Activated T-helper 2 cell treated with anti-CD3 and anti-CD28 coated beads, Interferon-gamma antibody, Interleukin-2, Interleukin-4, amounts not matched to agents 10 μg/mL and 5 μg/mL and 100 μg/mL, durations not matched to agents 14 hours and 24 hours and 36 hours (primary cell): ENCODE measurements at regions of chr10 and their contacts with region 1.

Region 1: DNA sequence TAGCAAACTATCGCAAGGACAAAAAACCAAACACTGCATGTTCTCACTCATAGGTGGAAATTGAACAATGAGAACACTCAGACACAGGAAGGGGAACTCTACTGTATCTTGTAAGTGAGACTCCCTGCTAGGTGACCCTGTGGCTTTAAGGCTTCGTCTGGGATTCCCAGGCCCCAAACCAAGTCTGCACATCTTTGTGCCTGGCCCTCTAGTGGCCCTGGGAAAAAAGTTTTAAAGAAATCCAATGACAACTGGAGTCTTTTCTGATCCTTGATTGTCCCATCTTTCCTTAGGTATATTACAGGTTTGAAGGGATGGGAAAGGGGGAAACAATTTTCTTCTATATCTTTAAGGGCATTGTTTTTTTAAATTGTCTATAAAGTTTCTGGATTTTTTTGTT is 10.6 kb upstream of the LIPM start:
- DNase-seq: no peak
- H3K4me3 Mint-ChIP-seq: no peak overlapping the region
- H3K27ac Mint-ChIP-seq: no peak overlapping the region
- H3K4me1 Mint-ChIP-seq: peaks cover 31% of the 10 kb centered on the region
- H3K27me3 Mint-ChIP-seq: peaks cover 20% of the 10 kb centered on the region

Region 2: GRCh38 chr10:88091490-88092105 is 700.3 kb before region 1 on chr10:
- intact Hi-C with region 1: loop called (anchors 10 kb)
- DNase-seq: peak; percentile 71
- H3K4me3 Mint-ChIP-seq: no peak overlapping the region
- H3K27ac Mint-ChIP-seq: no peak overlapping the region
- H3K4me1 Mint-ChIP-seq: peaks cover 34% of the 10 kb centered on the region
- H3K27me3 Mint-ChIP-seq: peaks cover 56% of the 10 kb centered on the region

Region 3: DNA sequence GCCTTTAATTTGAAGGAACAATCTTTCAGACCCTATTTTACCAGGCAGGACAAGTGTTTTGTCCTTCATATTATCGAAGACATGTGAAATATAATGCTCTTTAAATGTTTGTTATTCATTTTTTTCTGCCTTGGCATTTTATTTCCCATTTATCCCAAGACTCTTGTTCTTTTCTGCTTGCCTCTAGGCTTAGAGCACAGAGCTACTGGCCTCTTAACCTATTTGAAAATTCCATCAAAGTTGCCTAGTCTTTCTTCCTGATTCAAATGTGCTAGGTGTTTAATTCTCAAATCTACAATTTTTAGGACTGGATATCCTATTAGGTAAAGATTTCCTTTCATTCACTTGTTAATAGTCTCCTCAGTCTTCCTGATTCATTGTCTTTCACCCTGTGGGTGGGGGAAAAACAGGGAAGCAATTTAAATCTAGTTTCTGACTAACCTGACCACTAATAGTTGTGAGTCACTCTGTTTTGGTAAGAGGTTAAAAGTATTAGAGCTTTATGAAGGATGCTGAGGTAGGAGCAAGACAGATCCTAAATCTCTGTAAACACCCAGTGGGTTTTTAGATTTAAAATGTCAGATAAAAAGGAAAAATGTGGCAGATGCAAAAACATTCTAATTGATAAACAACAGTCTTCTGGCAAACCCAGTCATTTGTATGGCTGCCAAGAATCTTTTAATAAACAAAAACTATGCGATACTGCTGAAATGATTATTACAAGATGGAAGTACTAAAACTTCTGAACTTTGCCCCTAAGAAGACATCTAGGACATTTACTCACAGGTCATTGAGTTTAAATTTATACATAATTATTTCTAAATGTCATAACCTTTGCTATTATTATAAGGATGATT is 84.3 kb before region 1 on chr10:
- intact Hi-C with region 1: loop called (anchors 5 kb)
- DNase-seq: no peak
- H3K4me3 Mint-ChIP-seq: no peak overlapping the region
- H3K27ac Mint-ChIP-seq: no peak overlapping the region
- H3K4me1 Mint-ChIP-seq: peaks cover 18% of the 10 kb centered on the region
- H3K27me3 Mint-ChIP-seq: peaks cover 29% of the 10 kb centered on the region

Region 4: DNA sequence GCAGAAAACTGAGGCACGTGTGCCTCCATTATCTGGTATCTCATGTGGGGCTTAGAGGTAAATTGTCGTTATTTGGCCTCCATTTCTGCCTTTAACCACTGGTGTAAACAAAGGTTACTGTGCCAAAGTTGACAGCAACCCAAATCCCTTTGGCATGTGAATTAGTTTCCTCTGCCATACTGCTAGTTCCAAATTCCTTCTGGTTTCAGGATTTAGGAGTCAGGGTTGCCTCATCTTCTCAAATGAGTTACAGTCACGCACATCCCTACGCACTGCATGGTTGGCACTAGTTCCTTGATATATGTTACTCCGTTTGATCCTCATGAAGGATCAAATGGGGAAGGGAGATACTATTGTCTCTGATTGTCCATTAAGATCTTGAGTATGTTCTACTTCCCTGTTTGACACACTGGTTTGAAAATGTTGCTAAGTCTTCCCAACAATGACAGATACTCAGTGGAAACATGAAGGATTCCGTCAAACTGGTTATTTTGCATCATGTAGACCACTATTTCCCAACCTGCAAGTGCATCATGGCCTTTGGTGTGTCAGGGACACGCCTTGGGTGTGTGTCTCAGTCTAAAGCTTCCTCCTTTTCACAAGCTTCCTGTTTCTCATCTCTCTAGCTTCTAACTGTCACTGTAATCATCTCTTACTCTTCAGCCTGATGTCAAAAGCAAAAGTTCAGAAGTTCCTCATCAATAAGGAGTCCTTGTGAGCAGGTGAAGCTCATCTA is 32.4 kb before region 1 on chr10 and contains the start of gene LIPN:
- intact Hi-C with region 1: loop called (anchors 5 kb)
- DNase-seq: no peak
- H3K4me3 Mint-ChIP-seq: no peak within 1 kb of the TSS
- H3K27ac Mint-ChIP-seq: no peak within 1 kb of the TSS
- H3K4me1 Mint-ChIP-seq: peaks cover 19% of the 10 kb centered on the region
- H3K27me3 Mint-ChIP-seq: peaks cover 37% of the 10 kb centered on the region
- total RNA-seq, gene LIPN: not detected in 2 replicates

Region 5: DNA sequence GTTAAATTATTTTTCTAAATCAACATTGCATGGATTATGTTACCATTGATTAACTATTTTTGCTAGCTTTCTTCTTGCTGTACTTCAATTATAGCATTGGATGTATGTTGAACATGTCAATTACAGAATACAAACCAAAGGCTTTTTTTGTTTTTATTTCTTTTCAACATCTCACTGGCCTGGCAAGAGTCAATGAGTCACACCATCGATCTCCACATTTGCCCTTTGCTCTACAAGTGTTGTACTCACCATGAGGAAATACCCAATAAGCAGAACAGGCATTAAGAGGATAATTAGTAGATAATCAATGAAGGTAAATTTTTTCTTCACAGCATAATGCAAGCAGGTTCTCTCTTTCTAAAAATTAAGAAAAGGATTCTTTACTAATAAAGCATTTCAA is 36.4 kb after region 1 on chr10:
- intact Hi-C with region 1: loop called (anchors 5 kb)
- DNase-seq: no peak
- H3K4me3 Mint-ChIP-seq: no peak overlapping the region
- H3K27ac Mint-ChIP-seq: peak overlapping the region; percentile 21
- H3K4me1 Mint-ChIP-seq: peaks cover 72% of the 10 kb centered on the region
- H3K27me3 Mint-ChIP-seq: no peaks in the 10 kb centered on the region

Region 6: GRCh38 chr10:89001024-89001728 is 209.3 kb after region 1 on chr10:
- intact Hi-C with region 1: loop called (anchors 5 kb)
- DNase-seq: no peak
- H3K4me3 Mint-ChIP-seq: peak overlapping the region; percentile 58
- H3K27ac Mint-ChIP-seq: peak overlapping the region; percentile 66
- H3K4me1 Mint-ChIP-seq: peaks cover 65% of the 10 kb centered on the region
- H3K27me3 Mint-ChIP-seq: no peaks in the 10 kb centered on the region

Region 7: DNA sequence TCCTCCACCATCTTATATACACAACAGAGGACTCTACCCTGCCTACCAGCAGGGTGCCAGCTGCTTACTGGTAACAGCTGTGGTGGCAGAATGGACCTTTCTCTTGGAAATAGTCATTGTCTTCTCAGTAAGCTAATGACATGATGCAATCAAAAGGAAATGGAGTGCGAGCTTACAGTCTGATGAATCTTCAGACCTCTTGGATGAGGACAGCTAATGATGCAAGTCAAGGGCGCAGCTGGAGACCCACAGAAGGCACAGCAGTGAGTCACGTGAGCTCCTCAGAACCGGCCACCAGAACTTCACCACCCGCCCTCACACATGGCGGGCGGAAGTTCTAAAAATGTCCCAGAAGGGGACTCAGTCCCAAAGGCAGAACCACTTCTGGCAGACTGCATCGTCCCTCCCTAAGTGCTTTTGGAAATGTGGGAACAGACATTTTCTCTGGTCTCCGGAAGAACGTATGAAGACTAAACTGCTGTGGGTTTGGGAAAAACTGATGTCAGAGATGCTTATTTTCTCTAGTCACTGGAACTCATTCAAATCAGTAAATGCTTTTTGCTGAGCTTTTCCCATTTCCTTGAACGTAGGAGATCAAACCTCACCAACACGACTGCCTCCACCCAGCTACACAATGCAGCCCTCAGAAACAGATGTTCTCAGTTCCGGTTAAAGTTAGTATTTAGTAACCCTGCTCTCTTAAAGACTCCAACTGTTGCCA is 295.0 kb after region 1 on chr10:
- intact Hi-C with region 1: loop called (anchors 10 kb)
- DNase-seq: no peak
- H3K4me3 Mint-ChIP-seq: no peak overlapping the region
- H3K27ac Mint-ChIP-seq: no peak overlapping the region
- H3K4me1 Mint-ChIP-seq: peaks cover 13% of the 10 kb centered on the region
- H3K27me3 Mint-ChIP-seq: no peaks in the 10 kb centered on the region